ENCODE measurements at regions of chr2 and their contacts with region 1.

Region 1: DNA sequence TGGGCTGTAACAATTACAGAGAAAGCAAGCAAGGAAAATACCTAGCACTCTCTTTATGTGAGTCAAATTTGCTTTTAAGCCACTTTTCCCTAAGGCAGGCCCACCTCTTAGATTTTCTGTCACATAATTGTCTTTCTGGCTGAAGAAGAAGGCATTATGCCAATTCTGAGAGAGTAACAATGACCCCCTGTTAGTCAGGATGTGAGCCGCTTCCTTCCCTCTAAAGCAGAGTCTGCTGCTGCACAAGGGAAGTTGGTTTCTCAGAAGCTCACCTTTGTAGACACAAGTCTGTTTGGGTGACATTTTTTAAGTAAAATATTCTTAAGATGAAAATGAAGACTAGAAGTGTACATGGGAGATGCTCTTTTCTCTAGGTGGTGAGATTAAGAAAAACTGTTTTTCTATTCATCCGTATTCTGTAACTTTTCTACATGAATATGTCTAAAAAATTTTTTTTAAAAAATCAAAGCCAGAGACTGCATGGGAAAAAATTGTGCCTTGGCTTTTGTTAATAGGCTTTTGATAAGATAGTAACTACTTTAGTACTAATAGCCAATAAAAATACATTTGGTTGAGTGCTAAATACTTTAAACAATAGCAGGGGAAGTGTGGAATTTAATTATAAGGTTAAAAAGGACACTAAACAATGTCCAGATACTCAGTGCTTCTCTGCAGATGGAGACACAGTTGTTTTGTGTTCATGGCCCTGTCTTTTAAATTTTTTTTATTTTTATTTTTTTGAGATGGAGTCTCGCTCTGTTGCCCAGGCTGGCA is 33.4 kb upstream of the VPS54 start:
- DNase-seq: no peak
- ATAC-seq: no peak
- H3K4me3 ChIP-seq: no peak overlapping the region
- H3K4me1 ChIP-seq: peaks cover 5% of the 10 kb centered on the region
- CTCF ChIP-seq: no peak

Region 2: DNA sequence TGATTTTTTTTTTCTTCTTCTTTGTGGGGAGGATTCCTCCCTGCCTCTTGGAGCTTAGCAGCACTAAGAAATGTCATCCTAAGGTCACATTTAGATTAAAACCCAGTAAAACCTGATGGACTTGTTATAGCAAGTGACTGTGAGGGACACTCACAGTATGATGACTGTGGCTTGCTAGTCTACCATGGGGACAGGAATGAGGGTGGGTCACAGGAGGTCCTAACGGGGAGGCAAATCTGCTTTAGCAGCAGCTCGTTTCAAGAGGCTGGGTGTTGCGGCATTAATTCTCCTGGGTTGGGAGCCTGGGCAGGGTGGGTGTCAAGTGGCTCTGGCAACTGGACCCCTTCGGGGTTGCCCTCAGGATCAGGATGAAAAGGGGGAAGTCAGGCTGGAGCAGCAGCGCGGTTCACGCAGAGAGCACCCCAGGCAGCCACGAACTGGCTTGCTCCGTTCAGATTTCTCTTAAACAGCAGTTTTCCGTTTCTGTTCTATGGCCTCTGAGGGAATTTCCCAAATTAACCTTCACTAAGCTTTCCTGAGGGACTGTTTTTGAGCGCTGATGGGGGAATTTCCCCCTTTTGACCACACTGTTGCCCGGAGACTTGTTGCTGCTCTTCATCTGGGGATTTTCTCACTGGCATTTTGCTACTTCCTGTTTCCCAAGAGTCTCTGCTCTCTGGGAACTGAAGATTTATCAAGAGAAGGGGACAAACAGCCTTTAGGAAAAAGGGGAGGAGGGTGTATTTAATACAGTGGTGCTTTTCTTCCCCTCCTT is 151.4 kb after region 1 on chr2:
- intact Hi-C with region 1: no loop called
- DNase-seq: peak in 2 of 3 donors; percentile 49 to 60
- ATAC-seq: peak; percentile 43
- H3K4me3 ChIP-seq: no peak overlapping the region
- H3K4me1 ChIP-seq: peaks cover 14% of the 10 kb centered on the region
- CTCF ChIP-seq: no peak

Region 3: DNA sequence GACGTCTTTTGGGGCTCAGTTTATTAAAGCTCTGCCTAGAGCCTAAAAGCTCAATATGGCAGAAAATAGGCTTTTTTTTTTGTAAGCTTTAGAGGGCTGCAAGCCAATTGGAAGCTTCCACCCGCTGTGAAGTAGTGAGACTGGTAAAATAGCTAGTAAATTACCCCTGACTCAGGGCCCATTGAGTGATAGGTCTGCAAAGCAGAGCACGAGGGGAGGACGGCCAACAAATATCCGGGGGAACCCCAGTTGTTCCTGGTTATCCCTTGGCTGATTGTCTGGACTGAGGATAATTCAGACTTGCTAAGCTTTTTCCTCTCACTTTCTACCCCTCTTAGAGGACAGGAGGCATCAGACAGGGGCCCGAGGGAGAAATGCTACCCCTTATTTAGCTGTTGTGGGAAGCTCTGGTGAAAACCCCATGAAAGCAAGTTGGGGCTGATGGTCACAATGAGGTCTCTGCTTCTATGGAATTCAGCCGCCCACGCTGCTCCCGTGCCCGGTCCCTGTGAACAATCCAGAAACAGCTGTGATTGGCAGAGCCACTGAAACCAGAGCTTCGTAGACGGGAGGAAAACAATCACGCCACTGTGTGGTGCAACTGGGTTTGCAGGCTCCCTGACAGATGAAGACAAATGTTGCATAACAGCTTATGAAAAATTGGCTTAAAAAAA is 259.4 kb after region 1 on chr2:
- intact Hi-C with region 1: loop called in 1 of 2 experiments (anchors 5 kb)
- DNase-seq: peak; percentile 57 to 81 (median 73)
- ATAC-seq: peak; percentile 97
- H3K4me3 ChIP-seq: no peak overlapping the region
- H3K4me1 ChIP-seq: peaks cover 6% of the 10 kb centered on the region
- CTCF ChIP-seq: peak; percentile 29